ENCODE measurements at regions of chr1 and their contacts with region 1.

Region 1: GRCh38 chr1:2642560-2643413 is 10.0 kb upstream of the MMEL1 start:
- DNase-seq: peak; percentile 97
- ATAC-seq: peak; percentile 86
- H3K4me3 Mint-ChIP-seq: peak overlapping the region; percentile 80
- H3K27ac Mint-ChIP-seq: peak overlapping the region; percentile 83
- H3K4me1 Mint-ChIP-seq: no peaks in the 10 kb centered on the region
- H3K27me3 Mint-ChIP-seq: no peaks in the 10 kb centered on the region

Region 2: DNA sequence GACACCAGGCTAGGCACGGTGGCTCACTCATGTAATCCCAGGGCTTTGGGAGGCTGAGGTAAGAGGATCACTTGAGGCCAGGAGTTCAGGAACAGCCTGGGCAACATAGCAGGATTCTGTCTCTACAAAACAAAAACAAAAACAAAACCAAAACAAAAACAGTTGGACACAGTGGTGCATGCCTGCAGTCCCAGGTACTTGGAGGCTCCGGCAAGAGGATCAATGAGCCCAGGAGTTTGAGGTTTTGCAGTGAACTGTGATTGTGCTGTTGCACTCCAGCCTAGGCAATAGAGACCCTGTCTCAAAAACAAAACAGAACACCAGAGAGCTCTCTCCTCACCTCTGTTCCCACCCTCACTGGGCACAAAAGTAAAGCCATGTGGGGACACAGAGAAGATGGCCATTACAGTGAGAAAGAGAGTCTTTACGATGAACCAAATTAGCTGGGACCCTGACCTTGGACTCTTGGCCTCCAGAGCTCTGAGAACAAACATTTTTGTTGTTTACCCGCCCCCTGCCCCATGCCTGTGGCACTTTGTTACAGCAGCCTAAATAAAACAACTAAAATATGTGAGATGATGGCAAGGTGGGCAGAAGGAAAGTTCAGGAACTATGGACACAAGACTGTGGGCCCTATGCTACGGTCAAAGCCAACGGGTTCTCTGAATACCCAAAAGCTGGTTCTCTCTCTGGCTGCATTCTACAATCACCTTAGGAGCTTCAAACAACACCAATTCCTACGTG is 874.4 kb before region 1 on chr1:
- CTCF ChIA-PET with region 1: no interaction called
- POLR2A ChIA-PET with region 1: no interaction called
- intact Hi-C with region 1: no loop called
- DNase-seq: no peak
- ATAC-seq: no peak
- H3K4me3 Mint-ChIP-seq: no peak overlapping the region
- H3K27ac Mint-ChIP-seq: no peak overlapping the region
- H3K4me1 Mint-ChIP-seq: no peaks in the 10 kb centered on the region
- H3K27me3 Mint-ChIP-seq: no peaks in the 10 kb centered on the region

Region 3: DNA sequence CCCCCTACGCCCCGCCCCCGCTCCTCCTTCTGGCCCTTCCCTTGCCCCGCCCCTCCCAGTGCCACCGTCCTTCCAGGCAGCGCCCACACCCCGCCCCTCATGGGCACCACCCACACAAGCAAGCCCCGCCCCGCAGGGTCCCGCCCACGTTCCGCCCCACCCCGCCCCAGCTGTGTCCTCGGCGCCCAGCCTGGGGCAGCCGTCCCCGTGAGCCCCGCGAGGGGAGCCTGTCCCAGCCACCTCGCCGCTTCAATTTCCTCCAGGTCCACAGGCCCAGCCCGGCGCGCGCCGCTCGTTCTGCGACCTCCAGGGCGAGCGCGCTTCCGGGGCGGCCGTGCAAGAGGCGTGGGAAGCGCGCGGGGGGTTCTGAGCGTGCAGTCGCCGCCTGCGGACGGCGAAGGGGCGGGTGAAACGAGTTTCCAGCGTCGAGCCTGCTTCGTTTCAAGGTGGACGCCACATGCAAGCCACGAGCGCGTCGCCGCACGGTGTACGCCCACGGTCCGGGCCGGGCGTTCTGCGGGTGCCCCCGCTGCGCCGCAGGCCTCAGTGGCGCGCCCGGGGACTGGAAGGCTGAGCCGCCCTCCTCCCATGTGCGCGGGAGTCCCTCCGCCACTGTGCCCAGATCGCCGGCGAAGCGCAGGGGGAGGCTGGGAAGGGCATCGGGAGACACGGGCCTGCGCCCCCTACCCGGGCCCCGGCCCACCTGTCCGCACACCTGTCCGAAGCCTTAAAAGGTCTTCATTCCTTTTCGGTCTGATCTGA is 437.4 kb before region 1 on chr1:
- CTCF ChIA-PET with region 1: no interaction called
- POLR2A ChIA-PET with region 1: no interaction called
- intact Hi-C with region 1: loop called in 1 of 2 experiments (anchors 2 kb)
- DNase-seq: peak; percentile 98
- ATAC-seq: peak; percentile 88
- H3K4me3 Mint-ChIP-seq: peak overlapping the region; percentile 51
- H3K27ac Mint-ChIP-seq: no peak overlapping the region
- H3K4me1 Mint-ChIP-seq: peaks cover 3% of the 10 kb centered on the region
- H3K27me3 Mint-ChIP-seq: no peaks in the 10 kb centered on the region

Region 4: DNA sequence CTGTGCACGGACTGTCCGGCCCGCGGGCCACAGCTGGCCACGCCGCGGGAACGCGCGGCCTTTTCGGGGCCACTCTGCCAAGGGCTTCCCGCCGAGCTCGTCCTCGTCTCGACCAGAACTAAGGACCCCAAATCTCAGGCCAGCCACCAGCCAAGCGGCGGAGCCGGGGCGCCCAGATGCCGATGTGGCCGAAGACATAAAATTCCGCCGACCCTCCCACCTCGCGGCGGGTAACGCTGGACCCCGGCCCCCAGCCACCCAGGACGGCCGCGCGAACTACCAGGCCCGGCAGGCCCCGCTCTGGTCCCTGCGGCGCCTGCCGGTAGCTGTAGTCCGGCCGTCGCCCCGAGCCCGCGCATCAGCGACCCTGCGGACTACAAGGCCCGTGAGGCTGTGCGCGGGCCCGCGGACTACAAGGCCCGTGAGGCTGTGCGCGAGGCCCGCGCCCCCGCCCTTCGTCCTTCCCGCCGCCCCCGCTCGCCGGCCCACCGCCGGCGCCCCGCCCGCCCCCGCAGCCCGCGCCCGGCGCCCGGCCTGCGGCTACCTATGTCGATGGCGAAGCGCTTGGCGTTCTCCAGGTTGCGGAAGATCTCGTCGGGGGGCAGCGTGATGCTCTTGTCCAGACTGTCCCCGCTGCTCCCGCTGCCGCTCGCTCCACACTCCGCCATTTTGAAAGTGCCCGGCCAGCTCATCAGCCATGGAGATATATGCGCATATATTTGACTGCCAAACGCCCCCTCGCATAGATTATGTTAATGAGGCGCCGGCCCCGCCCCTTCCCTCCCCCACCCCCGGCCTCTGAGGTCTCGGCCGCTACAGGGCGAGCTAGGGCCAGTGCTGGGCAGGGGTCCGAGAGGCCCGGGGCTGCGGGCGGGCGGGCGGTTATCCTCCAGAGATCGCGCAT is 116.6 kb before region 1 on chr1 and contains the start of gene PANK4:
- CTCF ChIA-PET with region 1: no interaction called
- POLR2A ChIA-PET with region 1: no interaction called
- intact Hi-C with region 1: loop called (anchors 1 kb)
- DNase-seq: peak; percentile 96
- ATAC-seq: peak; percentile 87
- H3K4me3 Mint-ChIP-seq: peak within 1 kb of the TSS; percentile 77
- H3K27ac Mint-ChIP-seq: peak within 1 kb of the TSS; percentile 91
- H3K4me1 Mint-ChIP-seq: peaks cover 43% of the 10 kb centered on the region
- H3K27me3 Mint-ChIP-seq: peaks cover 3% of the 10 kb centered on the region
- total RNA-seq, gene PANK4: 32.4 to 39.2 TPM

Region 5: DNA sequence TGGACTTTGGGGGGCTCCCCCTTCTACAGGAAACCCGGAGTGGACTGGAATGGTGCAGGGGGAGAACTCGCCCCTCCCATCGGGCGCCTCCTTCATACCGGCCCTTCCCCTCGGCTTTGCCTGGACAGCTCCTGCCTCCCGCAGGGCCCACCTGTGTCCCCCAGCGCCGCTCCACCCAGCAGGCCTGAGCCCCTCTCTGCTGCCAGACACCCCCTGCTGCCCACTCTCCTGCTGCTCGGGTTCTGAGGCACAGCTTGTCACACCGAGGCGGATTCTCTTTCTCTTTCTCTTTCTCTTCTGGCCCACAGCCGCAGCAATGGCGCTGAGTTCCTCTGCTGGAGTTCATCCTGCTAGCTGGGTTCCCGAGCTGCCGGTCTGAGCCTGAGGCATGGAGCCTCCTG is 86.5 kb before region 1 on chr1 and contains the start of gene TNFRSF14:
- CTCF ChIA-PET with region 1: no interaction called
- POLR2A ChIA-PET with region 1: no interaction called
- intact Hi-C with region 1: loop called (anchors 1 to 2 kb)
- DNase-seq: peak; percentile 85
- ATAC-seq: peak; percentile 61
- H3K4me3 Mint-ChIP-seq: peak within 1 kb of the TSS; percentile 98
- H3K27ac Mint-ChIP-seq: peak within 1 kb of the TSS; percentile 98
- H3K4me1 Mint-ChIP-seq: peaks cover 36% of the 10 kb centered on the region
- H3K27me3 Mint-ChIP-seq: no peaks in the 10 kb centered on the region
- total RNA-seq, gene TNFRSF14: 135 to 145 TPM

Region 6: DNA sequence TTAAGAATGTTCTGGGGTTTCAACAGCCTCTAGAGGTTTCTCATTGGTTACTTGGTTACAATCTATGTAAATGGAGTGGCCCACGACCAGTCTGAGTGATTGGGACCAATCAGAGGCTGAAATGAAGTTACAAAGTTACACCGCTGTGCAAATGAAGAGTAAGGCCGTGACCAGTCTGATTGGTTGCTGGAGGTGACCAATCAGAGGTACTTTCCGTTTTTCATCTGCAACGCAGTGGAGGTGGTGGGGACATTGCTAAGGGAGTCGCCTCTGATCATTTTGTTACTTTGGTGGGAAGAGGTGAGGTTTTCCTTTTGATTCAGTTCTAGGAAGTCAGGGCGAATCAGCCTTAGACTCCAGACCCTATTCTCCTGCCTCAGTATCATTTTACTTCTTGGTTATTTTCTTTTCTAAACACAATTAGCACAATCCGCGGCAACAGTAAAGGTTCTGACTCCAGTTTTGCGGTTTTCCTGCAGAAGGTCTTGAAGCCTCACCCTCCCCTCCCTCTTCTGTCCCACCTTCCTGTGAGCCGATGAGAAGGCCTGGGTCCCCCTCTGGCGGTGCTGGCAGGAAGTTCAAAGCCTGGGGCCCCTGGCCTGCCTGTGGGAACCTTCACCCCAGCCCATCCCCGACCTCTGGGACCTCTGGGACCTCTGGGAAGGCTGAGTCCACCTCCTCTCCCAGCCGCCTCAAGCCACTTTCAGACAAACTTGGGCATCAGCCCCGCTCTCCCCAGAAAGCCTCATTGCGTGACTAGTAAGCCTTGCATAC is 197.4 kb after region 1 on chr1:
- CTCF ChIA-PET with region 1: no interaction called
- POLR2A ChIA-PET with region 1: no interaction called
- intact Hi-C with region 1: loop called in 1 of 2 experiments (anchors 1 kb)
- DNase-seq: peak; percentile 81
- ATAC-seq: peak; percentile 96
- H3K4me3 Mint-ChIP-seq: peak overlapping the region; percentile 67
- H3K27ac Mint-ChIP-seq: peak overlapping the region; percentile 84
- H3K4me1 Mint-ChIP-seq: peaks cover 21% of the 10 kb centered on the region
- H3K27me3 Mint-ChIP-seq: no peaks in the 10 kb centered on the region

Region 7: GRCh38 chr1:3772027-3772714 is 1129.4 kb after region 1 on chr1:
- CTCF ChIA-PET with region 1: no interaction called
- POLR2A ChIA-PET with region 1: no interaction called
- intact Hi-C with region 1: loop called in 1 of 2 experiments (anchors 10 kb)
- DNase-seq: peak; percentile 94
- ATAC-seq: peak; percentile 81
- H3K4me3 Mint-ChIP-seq: peak overlapping the region; percentile 70
- H3K27ac Mint-ChIP-seq: peak overlapping the region; percentile 78
- H3K4me1 Mint-ChIP-seq: peaks cover 10% of the 10 kb centered on the region
- H3K27me3 Mint-ChIP-seq: no peaks in the 10 kb centered on the region

Region 8: DNA sequence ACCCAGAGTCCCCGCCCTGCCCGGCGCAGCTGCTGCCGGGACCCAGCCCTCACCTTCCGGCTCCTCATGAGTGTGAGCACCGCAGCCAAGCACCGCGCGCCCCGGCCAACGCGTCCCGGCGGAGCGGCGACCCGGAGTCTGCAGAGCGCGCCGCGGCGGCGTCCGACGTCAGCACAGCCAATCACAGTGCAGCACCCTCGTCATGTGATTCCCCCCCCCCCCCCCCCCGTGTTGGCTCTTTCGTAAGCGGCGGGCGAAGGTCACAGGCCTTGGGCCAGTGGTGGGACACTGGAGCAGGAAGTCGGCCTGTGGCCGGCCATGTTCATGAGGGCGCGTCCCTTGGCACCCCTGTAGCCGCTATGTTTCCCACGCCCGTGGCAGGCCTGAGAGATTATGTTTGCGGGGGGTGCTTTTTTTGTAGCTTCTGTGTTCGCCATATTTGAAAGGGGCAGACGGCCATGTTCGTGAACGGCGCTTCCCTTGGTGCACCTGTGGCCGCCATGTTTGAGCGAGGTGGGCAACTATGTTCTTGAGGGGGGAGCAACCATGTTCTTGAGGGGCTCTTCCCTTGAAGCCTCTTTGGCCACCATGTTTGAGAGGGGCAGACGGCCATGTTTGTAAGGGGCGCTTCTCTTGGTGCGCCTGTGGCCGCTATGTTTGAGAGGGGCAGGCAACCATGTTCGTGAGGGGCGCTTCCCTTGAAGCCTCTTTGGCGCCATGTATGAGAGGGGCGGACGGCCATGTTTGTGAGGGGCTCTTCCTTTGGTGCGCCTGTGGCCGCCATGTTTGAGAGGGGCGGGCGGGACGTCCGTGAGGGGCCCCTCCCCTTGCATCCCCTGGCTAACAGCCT is 1257.6 kb after region 1 on chr1 and contains the start of gene C1orf174:
- CTCF ChIA-PET with region 1: no interaction called
- POLR2A ChIA-PET with region 1: no interaction called
- intact Hi-C with region 1: loop called in 1 of 2 experiments (anchors 2 kb)
- DNase-seq: peak; percentile 94
- ATAC-seq: peak; percentile 76
- H3K4me3 Mint-ChIP-seq: peak within 1 kb of the TSS; percentile 87
- H3K27ac Mint-ChIP-seq: peak within 1 kb of the TSS; percentile 98
- H3K4me1 Mint-ChIP-seq: peaks cover 51% of the 10 kb centered on the region
- H3K27me3 Mint-ChIP-seq: no peaks in the 10 kb centered on the region
- total RNA-seq, gene C1orf174: 39.8 to 49.4 TPM